B cell (primary cell): ENCODE measurements at regions of chr1 and their contacts with region 1.

Region 1: DNA sequence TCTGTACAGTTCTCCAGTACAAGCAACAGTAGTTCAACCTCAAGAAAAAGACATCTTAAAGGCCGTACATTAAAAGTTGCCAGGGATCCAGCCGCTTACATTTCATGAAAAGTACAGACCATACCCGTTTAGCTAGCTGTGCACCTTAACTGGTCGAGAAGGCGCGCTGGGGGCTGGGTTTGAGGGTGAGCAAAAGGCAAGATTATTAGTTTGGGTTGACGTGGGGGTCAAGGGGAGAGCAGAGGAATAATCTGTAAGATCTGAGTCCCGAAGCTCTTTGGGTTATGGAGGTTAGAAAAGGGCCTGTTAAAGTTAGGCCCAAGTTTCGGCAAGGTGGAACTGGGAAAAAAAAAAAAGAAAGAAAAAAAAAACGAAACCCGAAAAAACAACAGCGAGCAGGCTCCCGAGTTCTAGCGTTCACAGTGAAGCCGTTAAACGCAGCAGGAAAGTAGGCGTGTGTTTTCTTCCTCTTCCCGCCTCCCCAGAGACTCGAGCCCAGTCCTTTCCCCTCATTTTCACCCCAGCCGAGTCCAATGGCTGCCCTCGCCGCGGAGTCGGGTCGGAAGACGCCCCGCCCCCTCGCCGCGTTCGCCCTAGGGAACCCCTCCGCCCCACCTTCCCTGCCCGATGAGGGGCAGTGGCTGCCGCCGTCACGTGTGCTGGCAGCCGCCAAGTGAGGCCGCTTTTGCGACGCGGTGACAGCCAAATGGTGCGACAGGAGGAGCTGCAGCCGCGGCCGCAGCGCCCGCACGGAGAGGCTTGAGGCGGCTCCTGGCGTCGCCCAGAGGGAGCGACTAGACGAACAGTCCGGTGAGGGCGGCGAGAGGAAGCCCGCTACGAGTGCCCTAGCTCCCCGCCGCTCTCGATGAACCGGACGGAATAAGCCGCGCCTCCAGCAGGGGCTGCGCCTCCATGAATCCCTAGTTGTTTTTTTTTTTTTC is at the start of gene PKN2:
- DNase-seq: peak; percentile 98
- ATAC-seq: peak; percentile 90
- H3K4me3 ChIP-seq: peak within 1 kb of the TSS; percentile 81 to 97 (median 94)
- H3K4me3 Mint-ChIP-seq: peak within 1 kb of the TSS; percentile 95
- H3K27ac ChIP-seq: peak within 1 kb of the TSS; percentile 85 to 89
- H3K27ac Mint-ChIP-seq: peak within 1 kb of the TSS; percentile 98
- H3K4me1 ChIP-seq: peaks cover 11 to 19% of the 10 kb centered on the region in 2 donors
- H3K4me1 Mint-ChIP-seq: peaks cover 28% of the 10 kb centered on the region
- H3K27me3 ChIP-seq: no peaks in the 10 kb centered on the region
- H3K27me3 Mint-ChIP-seq: no peaks in the 10 kb centered on the region
- CTCF ChIP-seq: no peak
- total RNA-seq, gene PKN2: 51.6 and 57.9 TPM in 2 replicates

Region 2: GRCh38 chr1:86704458-86704971 is 1979.3 kb before region 1 on chr1 and contains the start of gene SH3GLB1:
- CTCF ChIA-PET with region 1: interaction called, 3 read pairs
- POLR2A ChIA-PET with region 1: no interaction called
- intact Hi-C with region 1: loop called (anchors 1 kb)
- DNase-seq: peak; percentile 97
- ATAC-seq: peak; percentile 85
- H3K4me3 ChIP-seq: peak within 1 kb of the TSS; percentile 79 to 90 (median 82)
- H3K4me3 Mint-ChIP-seq: peak within 1 kb of the TSS; percentile 98
- H3K27ac ChIP-seq: peak within 1 kb of the TSS; percentile 78 to 93
- H3K27ac Mint-ChIP-seq: peak within 1 kb of the TSS; percentile 100
- H3K4me1 ChIP-seq: peaks cover 24 to 30% of the 10 kb centered on the region in 2 donors
- H3K4me1 Mint-ChIP-seq: peaks cover 44% of the 10 kb centered on the region
- H3K27me3 ChIP-seq: no peaks in the 10 kb centered on the region
- H3K27me3 Mint-ChIP-seq: no peaks in the 10 kb centered on the region
- CTCF ChIP-seq: peak; percentile 91
- total RNA-seq, gene SH3GLB1: 55.3 and 57.3 TPM in 2 replicates

Region 3: DNA sequence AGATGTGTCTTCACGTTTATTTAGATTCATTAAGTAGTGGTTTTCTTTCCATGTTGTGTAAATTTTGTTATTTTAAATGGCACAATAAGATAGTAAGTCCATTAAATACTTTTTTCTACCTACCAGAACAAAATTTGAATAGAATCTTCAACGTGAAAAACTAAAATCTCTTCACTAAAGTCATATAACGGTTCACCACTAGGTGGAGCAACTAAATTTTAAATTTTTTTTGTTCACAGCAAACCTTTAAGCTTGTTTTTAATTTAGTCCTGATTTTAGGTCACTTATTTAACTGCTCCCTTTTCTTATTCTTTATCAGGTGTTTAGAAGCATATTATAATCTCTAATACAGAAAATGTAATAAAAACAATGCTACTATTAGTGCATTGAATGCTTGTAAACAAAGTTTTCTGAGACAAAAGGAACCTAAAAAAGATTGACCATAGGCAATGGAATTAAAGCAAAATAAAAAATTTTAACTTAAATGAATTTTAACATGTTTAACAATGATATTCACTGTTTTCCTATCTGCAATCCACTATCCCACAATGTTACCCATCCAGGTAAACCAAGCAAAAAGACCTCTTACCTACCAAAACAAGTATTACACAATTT is 28.0 kb before region 1 on chr1:
- CTCF ChIA-PET with region 1: interaction called, 34 read pairs
- POLR2A ChIA-PET with region 1: no interaction called
- intact Hi-C with region 1: loop called (anchors 2 kb)
- DNase-seq: peak; percentile 53
- ATAC-seq: no peak
- H3K4me3 ChIP-seq: no peak overlapping the region
- H3K4me3 Mint-ChIP-seq: no peak overlapping the region
- H3K27ac ChIP-seq: no peak overlapping the region
- H3K27ac Mint-ChIP-seq: no peak overlapping the region
- H3K4me1 ChIP-seq: no peaks in the 10 kb centered on the region
- H3K4me1 Mint-ChIP-seq: peaks cover 2% of the 10 kb centered on the region
- H3K27me3 ChIP-seq: no peaks in the 10 kb centered on the region
- H3K27me3 Mint-ChIP-seq: no peaks in the 10 kb centered on the region
- CTCF ChIP-seq: peak; percentile 88

Region 4: GRCh38 chr1:88701275-88701674 is 17.5 kb after region 1 on chr1:
- CTCF ChIA-PET with region 1: interaction called, 8 read pairs
- POLR2A ChIA-PET with region 1: interaction called, 8 read pairs
- intact Hi-C with region 1: loop called (anchors 2 kb)
- DNase-seq: peak; percentile 56
- ATAC-seq: peak; percentile 78
- H3K4me3 ChIP-seq: peak overlapping the region in 3 of 5 experiments; percentile 5 to 53 (median 10)
- H3K4me3 Mint-ChIP-seq: peak overlapping the region; percentile 44
- H3K27ac ChIP-seq: peak overlapping the region; percentile 51 to 72
- H3K27ac Mint-ChIP-seq: peak overlapping the region; percentile 69
- H3K4me1 ChIP-seq: peaks cover 17 to 24% of the 10 kb centered on the region in 2 donors
- H3K4me1 Mint-ChIP-seq: peaks cover 46% of the 10 kb centered on the region
- H3K27me3 ChIP-seq: no peaks in the 10 kb centered on the region
- H3K27me3 Mint-ChIP-seq: no peaks in the 10 kb centered on the region
- CTCF ChIP-seq: no peak

Region 5: GRCh38 chr1:89274411-89274857 is 590.6 kb after region 1 on chr1:
- CTCF ChIA-PET with region 1: no interaction called
- POLR2A ChIA-PET with region 1: no interaction called
- intact Hi-C with region 1: loop called (anchors 10 kb)
- DNase-seq: no peak
- ATAC-seq: no peak
- H3K4me3 ChIP-seq: peak overlapping the region in 1 of 5 experiments; percentile 18
- H3K4me3 Mint-ChIP-seq: peak overlapping the region; percentile 75
- H3K27ac ChIP-seq: no peak overlapping the region
- H3K27ac Mint-ChIP-seq: peak overlapping the region; percentile 70
- H3K4me1 ChIP-seq: peaks cover 30 to 37% of the 10 kb centered on the region in 2 donors
- H3K4me1 Mint-ChIP-seq: peaks cover 53% of the 10 kb centered on the region
- H3K27me3 ChIP-seq: no peaks in the 10 kb centered on the region
- H3K27me3 Mint-ChIP-seq: no peaks in the 10 kb centered on the region
- CTCF ChIP-seq: no peak

Region 6: GRCh38 chr1:89994805-89995597 is 1311.2 kb after region 1 on chr1 and contains the start of gene ZNF326:
- CTCF ChIA-PET with region 1: no interaction called
- POLR2A ChIA-PET with region 1: no interaction called
- intact Hi-C with region 1: loop called (anchors 1 kb)
- DNase-seq: peak; percentile 94
- ATAC-seq: peak; percentile 97
- H3K4me3 ChIP-seq: peak within 1 kb of the TSS; percentile 72 to 95 (median 80)
- H3K4me3 Mint-ChIP-seq: peak within 1 kb of the TSS; percentile 99
- H3K27ac ChIP-seq: peak within 1 kb of the TSS; percentile 85 to 87
- H3K27ac Mint-ChIP-seq: peak within 1 kb of the TSS; percentile 96
- H3K4me1 ChIP-seq: peaks cover 8 to 12% of the 10 kb centered on the region in 2 donors
- H3K4me1 Mint-ChIP-seq: peaks cover 32% of the 10 kb centered on the region
- H3K27me3 ChIP-seq: no peaks in the 10 kb centered on the region
- H3K27me3 Mint-ChIP-seq: no peaks in the 10 kb centered on the region
- CTCF ChIP-seq: no peak
- total RNA-seq, gene ZNF326: 32.0 and 34.1 TPM in 2 replicates